Endothelial cell of umbilical vein (primary cell): ENCODE measurements at regions of chr2 and their contacts with region 1.

Region 1: DNA sequence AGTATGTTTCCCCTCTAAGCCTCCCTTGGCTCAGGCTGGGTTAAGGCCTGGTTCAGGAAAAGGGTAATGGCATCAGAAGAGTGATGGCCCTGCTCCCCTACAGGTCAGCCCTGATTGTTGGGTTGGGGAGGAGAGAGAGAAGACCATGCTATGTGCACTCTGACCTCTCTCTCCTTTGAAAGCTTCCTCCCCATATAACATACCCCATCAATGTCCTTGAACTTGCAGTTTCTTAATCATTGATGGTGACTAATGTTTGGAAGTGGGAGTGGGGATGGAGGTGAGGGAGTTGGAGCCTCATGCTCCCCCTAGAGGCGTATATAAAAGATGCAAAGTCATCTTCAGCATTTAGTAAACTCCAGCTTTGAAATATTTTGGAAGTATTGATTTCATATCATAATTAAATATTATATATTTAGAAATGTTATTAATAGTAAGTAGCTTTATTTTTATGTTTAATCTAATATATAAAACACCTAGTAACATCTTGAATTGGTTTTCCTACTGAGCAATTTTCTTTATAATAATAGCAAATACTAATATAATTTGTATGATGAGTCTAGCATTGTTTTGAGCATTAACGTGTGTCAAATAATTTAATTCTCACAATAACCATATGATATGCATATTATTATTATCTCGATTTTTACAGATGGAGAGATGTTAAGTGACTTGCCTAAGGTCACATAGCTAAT is 8.8 kb downstream of the PLCL1 start:
- DNase-seq: peak; percentile 33
- H3K4me3 ChIP-seq: no peak overlapping the region
- H3K27ac ChIP-seq: no peak overlapping the region
- H3K4me1 ChIP-seq: peaks cover 2% of the 10 kb centered on the region
- H3K27me3 ChIP-seq: no peaks in the 10 kb centered on the region
- CTCF ChIP-seq: peak; percentile 30 to 46
- POLR2A ChIP-seq: no peak

Region 2: DNA sequence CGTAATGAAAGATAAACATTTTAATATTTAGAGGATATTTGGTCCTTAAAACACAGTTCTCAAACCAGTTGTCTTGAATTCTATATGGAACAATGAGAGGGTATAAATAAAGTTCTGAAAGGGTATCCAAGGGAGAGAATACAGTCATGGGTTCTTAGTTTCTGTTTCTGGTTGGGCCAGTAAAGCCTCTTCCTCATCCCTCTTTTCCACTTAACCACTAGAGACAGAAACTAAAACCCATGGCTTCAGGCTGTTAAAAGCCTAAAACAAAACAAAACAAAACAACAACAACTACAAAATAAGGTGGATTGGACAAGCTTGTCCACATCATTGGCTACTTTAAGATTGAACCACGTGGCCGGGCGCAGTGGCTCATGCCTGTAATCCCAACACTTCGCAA is 341.1 kb before region 1 on chr2:
- CTCF ChIA-PET with region 1: no interaction called
- POLR2A ChIA-PET with region 1: no interaction called
- dilution Hi-C with region 1: no loop called
- intact Hi-C with region 1: no loop called
- DNase-seq: no peak
- H3K4me3 ChIP-seq: no peak overlapping the region
- H3K27ac ChIP-seq: no peak overlapping the region
- H3K4me1 ChIP-seq: no peaks in the 10 kb centered on the region
- H3K27me3 ChIP-seq: no peaks in the 10 kb centered on the region
- CTCF ChIP-seq: no peak
- POLR2A ChIP-seq: no peak

Region 3: GRCh38 chr2:197828464-197829135 is 15.4 kb after region 1 on chr2:
- CTCF ChIA-PET with region 1: interaction called, 17 read pairs
- POLR2A ChIA-PET with region 1: no interaction called
- dilution Hi-C with region 1: no loop called
- intact Hi-C with region 1: no loop called
- DNase-seq: peak; percentile 91
- H3K4me3 ChIP-seq: no peak overlapping the region
- H3K27ac ChIP-seq: no peak overlapping the region
- H3K4me1 ChIP-seq: peaks cover 28% of the 10 kb centered on the region
- H3K27me3 ChIP-seq: no peaks in the 10 kb centered on the region
- CTCF ChIP-seq: no peak
- POLR2A ChIP-seq: no peak